ENCODE measurements at regions of chrX and their contacts with region 1.

Region 1: GRCh38 chrX:133249266-133250058 is 31.3 kb upstream of the TFDP3 start:
- DNase-seq: peak; percentile 44
- ATAC-seq: peak; percentile 53; the same call in 1 of the 2 replicates
- H3K4me3 ChIP-seq: no peak overlapping the region
- H3K27ac ChIP-seq: no peak overlapping the region
- H3K4me1 ChIP-seq: peaks cover 6% of the 10 kb centered on the region; the same call in 1 of the 2 replicates
- H3K27me3 ChIP-seq: no peaks in the 10 kb centered on the region
- CTCF ChIP-seq: peak; percentile 53

Region 2: DNA sequence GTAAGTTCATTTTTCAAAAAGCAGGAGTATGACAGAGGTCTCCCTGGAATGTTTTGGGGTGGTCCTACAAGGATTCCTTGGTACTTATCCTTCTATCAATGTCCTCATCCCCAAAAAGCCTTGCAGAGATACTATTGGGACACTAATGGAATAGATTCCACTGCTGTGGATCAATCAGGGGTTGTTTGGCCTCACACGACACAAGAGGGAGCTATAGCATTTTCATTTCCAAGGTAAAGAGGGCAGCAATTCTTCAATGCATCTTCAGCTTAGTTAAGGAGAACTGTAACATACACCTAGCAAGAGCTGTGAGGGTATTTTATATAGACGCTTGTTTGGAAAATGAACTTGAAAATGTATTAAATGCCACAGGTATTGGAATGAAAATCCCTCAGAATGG is 203.5 kb before region 1 on chrX:
- CTCF ChIA-PET with region 1: interaction called, 4 read pairs
- POLR2A ChIA-PET with region 1: no interaction called
- intact Hi-C with region 1: loop called (anchors 1 kb)
- DNase-seq: peak; percentile 60
- ATAC-seq: peak; percentile 76
- H3K4me3 ChIP-seq: no peak overlapping the region
- H3K27ac ChIP-seq: no peak overlapping the region
- H3K4me1 ChIP-seq: no peaks in the 10 kb centered on the region
- H3K27me3 ChIP-seq: no peaks in the 10 kb centered on the region
- CTCF ChIP-seq: peak; percentile 80

Region 3: GRCh38 chrX:133215747-133216146 is 33.7 kb before region 1 on chrX:
- CTCF ChIA-PET with region 1: no interaction called
- POLR2A ChIA-PET with region 1: no interaction called
- intact Hi-C with region 1: loop called (anchors 1 kb)
- DNase-seq: peak; percentile 53
- ATAC-seq: peak; percentile 70
- H3K4me3 ChIP-seq: no peak overlapping the region
- H3K27ac ChIP-seq: no peak overlapping the region
- H3K4me1 ChIP-seq: no peaks in the 10 kb centered on the region
- H3K27me3 ChIP-seq: no peaks in the 10 kb centered on the region
- CTCF ChIP-seq: peak; percentile 69

Region 4: GRCh38 chrX:133235830-133236229 is 13.6 kb before region 1 on chrX:
- CTCF ChIA-PET with region 1: no interaction called
- POLR2A ChIA-PET with region 1: no interaction called
- intact Hi-C with region 1: no loop called
- DNase-seq: no peak
- ATAC-seq: no peak
- H3K4me3 ChIP-seq: no peak overlapping the region
- H3K27ac ChIP-seq: no peak overlapping the region
- H3K4me1 ChIP-seq: no peaks in the 10 kb centered on the region
- H3K27me3 ChIP-seq: no peaks in the 10 kb centered on the region
- CTCF ChIP-seq: no peak

Region 5: DNA sequence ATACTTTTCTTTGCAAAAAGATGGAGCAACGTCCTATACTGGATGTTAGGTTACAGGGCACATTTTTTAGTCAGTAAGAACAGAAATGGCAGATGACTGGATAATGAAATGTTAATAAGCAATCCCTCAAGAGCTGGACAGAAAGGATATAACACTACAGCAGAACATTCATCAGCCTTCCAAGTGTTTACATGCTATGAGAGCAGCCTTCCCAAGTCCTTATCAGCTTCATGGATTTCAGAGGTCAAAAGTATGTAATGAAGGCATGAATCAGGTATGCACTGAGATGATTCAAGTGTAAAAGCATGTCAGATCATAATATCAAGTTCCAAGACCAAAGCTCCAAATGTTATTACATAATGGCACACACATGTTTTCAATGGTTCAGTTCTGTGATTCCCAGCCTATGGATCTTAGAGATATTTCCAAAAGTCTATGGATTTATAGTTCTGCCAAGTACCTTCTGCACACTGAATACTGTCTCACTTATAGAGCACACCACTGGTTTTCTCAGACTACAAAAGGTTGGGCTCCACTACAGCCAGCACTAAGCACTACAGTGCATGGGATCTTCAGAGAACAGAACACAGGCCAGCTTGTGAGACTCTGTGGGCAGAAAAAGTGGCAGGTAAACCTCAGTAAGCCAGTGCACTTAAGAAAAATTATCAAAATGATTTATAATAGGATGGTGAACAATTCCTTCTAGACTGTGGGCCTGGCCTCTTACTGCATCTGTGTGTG is 116.6 kb after region 1 on chrX:
- CTCF ChIA-PET with region 1: no interaction called
- POLR2A ChIA-PET with region 1: no interaction called
- intact Hi-C with region 1: no loop called
- DNase-seq: no peak
- ATAC-seq: no peak
- H3K4me3 ChIP-seq: no peak overlapping the region
- H3K27ac ChIP-seq: no peak overlapping the region
- H3K4me1 ChIP-seq: no peaks in the 10 kb centered on the region
- H3K27me3 ChIP-seq: no peaks in the 10 kb centered on the region
- CTCF ChIP-seq: no peak

Region 6: GRCh38 chrX:133415276-133416105 is 166.0 kb after region 1 on chrX and contains the start of gene GPC4:
- CTCF ChIA-PET with region 1: no interaction called
- POLR2A ChIA-PET with region 1: no interaction called
- intact Hi-C with region 1: loop called (anchors 10 kb)
- DNase-seq: peak; percentile 76
- ATAC-seq: peak; percentile 80
- H3K4me3 ChIP-seq: peak within 1 kb of the TSS; percentile 97
- H3K27ac ChIP-seq: no peak within 1 kb of the TSS
- H3K4me1 ChIP-seq: 0 out of 2 replicates have a peak, but pooled peaks cover 3% of the 10 kb centered on the region
- H3K27me3 ChIP-seq: no peaks in the 10 kb centered on the region
- CTCF ChIP-seq: no peak
- total RNA-seq, gene GPC4: 4.0 and 6.4 TPM in 2 replicates

Region 7: GRCh38 chrX:133645977-133646718 is 396.7 kb after region 1 on chrX:
- CTCF ChIA-PET with region 1: no interaction called
- POLR2A ChIA-PET with region 1: no interaction called
- intact Hi-C with region 1: no loop called
- DNase-seq: no peak
- ATAC-seq: no peak
- H3K4me3 ChIP-seq: no peak overlapping the region
- H3K27ac ChIP-seq: no peak overlapping the region
- H3K4me1 ChIP-seq: no peaks in the 10 kb centered on the region
- H3K27me3 ChIP-seq: no peaks in the 10 kb centered on the region
- CTCF ChIP-seq: no peak

Measured in PC-3 (cell line).